ENCODE measurements at regions of chr11 and their contacts with region 1.

Region 1: GRCh38 chr11:62652161-62653006 is 718 bp downstream of the INTS5 start:
- DNase-seq: no peak
- H3K4me3 Mint-ChIP-seq: peak overlapping the region; percentile 98
- H3K27ac Mint-ChIP-seq: peak overlapping the region; percentile 94
- H3K4me1 Mint-ChIP-seq: peaks cover 19% of the 10 kb centered on the region
- H3K27me3 Mint-ChIP-seq: no peaks in the 10 kb centered on the region

Region 2: DNA sequence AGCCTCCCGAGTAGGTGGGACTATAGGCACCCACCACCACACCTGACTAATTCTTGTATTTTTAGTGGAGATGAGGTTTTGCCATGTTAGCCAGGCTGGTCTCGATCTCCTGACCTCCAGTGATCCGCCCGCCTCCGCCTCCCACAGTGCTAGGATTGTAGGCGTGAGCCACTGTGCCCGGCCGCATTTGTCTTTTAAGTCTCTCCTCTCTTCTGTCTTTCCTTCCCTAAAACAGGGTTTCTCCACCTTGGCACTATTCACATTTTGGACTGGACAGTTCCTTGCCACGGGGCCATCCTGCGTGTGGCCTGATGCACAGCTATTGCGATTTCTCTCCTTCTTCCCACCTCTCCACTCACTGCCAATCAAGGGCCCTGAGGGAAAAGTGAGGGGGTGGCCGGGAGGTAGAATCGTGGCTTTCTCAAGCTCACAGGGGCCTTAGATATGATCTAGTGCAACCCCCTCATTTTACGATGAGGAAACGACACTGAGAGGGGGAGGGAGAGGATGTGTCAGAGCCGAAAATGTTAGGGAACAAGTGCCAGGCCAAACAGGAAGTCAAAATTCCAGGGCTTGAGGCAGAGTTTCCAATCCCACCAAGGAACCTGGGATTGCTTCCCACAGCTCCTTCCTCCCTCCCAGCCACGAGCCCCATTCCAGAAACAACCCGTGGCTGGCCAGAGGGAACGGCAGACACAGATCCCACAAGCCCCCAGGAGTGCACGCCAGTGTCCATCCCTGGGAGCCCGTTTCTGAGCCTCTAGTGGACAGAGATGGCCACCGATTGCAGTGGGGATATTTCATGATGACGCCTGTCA is 212.4 kb before region 1 on chr11:
- intact Hi-C with region 1: no loop called
- DNase-seq: no peak
- H3K4me3 Mint-ChIP-seq: no peak overlapping the region
- H3K27ac Mint-ChIP-seq: no peak overlapping the region
- H3K4me1 Mint-ChIP-seq: peaks cover 14% of the 10 kb centered on the region
- H3K27me3 Mint-ChIP-seq: no peaks in the 10 kb centered on the region

Region 3: GRCh38 chr11:62601394-62602140 is 50.8 kb before region 1 on chr11 and contains the start of gene MTA2:
- intact Hi-C with region 1: loop called (anchors 2 kb)
- DNase-seq: peak; percentile 100
- H3K4me3 Mint-ChIP-seq: peak within 1 kb of the TSS; percentile 95
- H3K27ac Mint-ChIP-seq: peak within 1 kb of the TSS; percentile 88
- H3K4me1 Mint-ChIP-seq: peaks cover 44% of the 10 kb centered on the region
- H3K27me3 Mint-ChIP-seq: no peaks in the 10 kb centered on the region
- total RNA-seq, gene MTA2: 219 and 220 TPM in 2 replicates

Region 4: GRCh38 chr11:62621567-62622470 is 30.6 kb before region 1 on chr11 and contains the start of gene B3GAT3:
- intact Hi-C with region 1: loop called (anchors 2 kb)
- DNase-seq: peak; percentile 99
- H3K4me3 Mint-ChIP-seq: peak within 1 kb of the TSS; percentile 97
- H3K27ac Mint-ChIP-seq: peak within 1 kb of the TSS; percentile 99
- H3K4me1 Mint-ChIP-seq: peaks cover 25% of the 10 kb centered on the region
- H3K27me3 Mint-ChIP-seq: peaks cover 1% of the 10 kb centered on the region
- total RNA-seq, gene B3GAT3: 80.3 and 91.4 TPM in 2 replicates

Region 5: GRCh38 chr11:62671575-62672389 is 19.4 kb after region 1 on chr11 and contains the starts of genes LBHD1 and UQCC3:
- intact Hi-C with region 1: loop called (anchors 2 kb)
- DNase-seq: peak; percentile 94
- H3K4me3 Mint-ChIP-seq: peak within 1 kb of the TSS; percentile 88
- H3K27ac Mint-ChIP-seq: peak within 1 kb of the TSS; percentile 92
- H3K4me1 Mint-ChIP-seq: peaks cover 38% of the 10 kb centered on the region
- H3K27me3 Mint-ChIP-seq: no peaks in the 10 kb centered on the region
- total RNA-seq, gene LBHD1: 21.5 and 23.0 TPM in 2 replicates
- total RNA-seq, gene UQCC3: 8.6 and 9.4 TPM in 2 replicates

Region 6: GRCh38 chr11:62705880-62706849 is 53.8 kb after region 1 on chr11:
- intact Hi-C with region 1: loop called (anchors 1 kb)
- DNase-seq: peak; percentile 97
- H3K4me3 Mint-ChIP-seq: peak overlapping the region; percentile 96
- H3K27ac Mint-ChIP-seq: peak overlapping the region; percentile 89
- H3K4me1 Mint-ChIP-seq: peaks cover 33% of the 10 kb centered on the region
- H3K27me3 Mint-ChIP-seq: no peaks in the 10 kb centered on the region